Heart right ventricle (tissue), 16 donors: ENCODE measurements at regions of chr3 and their contacts with region 1.

Region 1: DNA sequence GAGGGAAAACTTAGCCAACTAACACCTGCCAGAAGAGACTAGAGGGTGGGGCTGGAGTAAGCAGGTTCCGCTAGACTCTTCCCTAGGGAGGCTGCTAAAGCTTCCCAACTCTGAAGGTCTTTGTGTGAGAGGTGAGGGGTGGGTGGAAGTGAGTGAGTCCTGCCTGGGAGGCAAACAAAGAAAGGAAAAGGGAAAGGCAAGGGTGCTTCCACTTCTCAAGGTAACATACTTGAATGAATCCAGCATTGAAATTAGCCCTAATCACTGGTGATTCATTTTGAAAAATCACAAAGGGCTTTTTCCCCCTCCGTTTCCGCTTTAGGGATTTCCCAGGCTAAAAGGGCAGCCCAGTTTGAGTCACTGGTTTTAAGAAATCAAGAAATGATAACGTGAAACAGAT is 220.5 kb upstream of the ADAMTS9 start:
- DNase-seq: peak in 1 of 2 donors; percentile 73
- ATAC-seq: peak; percentile 76 to 94 (median 91)
- H3K4me3 ChIP-seq: no peak overlapping the region
- H3K27ac ChIP-seq: peak overlapping the region in 9 of 10 donors; percentile 5 to 84 (median 75)
- H3K4me1 ChIP-seq: peaks cover 1 to 69% (median 46%) of the 10 kb centered on the region in 9 donors
- H3K27me3 ChIP-seq: no peaks in the 10 kb centered on the region
- CTCF ChIP-seq: no peak

Region 2: DNA sequence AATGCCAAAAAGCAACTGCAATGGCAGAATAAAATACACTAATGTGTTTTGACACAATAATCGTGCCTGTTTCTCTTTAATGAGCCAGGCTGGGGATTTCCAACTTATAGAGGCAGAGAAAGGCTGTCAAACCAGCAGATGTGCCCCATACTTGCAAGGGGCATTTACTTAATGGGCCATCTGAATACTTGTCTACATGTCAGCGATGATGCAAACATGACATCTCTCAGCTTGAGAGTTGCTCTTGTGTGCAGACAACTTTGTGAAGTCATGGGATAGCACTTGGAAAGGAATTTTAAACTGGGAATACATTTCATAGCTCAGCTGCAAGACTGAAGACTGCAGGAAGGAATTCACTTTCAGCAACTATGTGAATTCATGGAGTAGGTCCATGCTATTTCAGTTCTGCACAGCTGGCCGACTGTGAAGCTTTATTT is 93.1 kb before region 1 on chr3:
- intact Hi-C with region 1: loop called in 2 of 10 experiments (anchors 10 kb)
- DNase-seq: peak in 1 of 2 donors; percentile 36
- ATAC-seq: peak in 7 of 8 donors; percentile 83 to 92 (median 86)
- H3K4me3 ChIP-seq: peak overlapping the region in 1 of 10 donors; percentile 28
- H3K27ac ChIP-seq: peak overlapping the region in 9 of 10 donors; percentile 24 to 72 (median 54)
- H3K4me1 ChIP-seq: peaks cover 0 to 37% (median 29%) of the 10 kb centered on the region in 9 donors
- H3K27me3 ChIP-seq: no peaks in the 10 kb centered on the region
- CTCF ChIP-seq: peak in 2 of 9 donors; percentile 16 to 19